ENCODE measurements at regions of chr17 and their contacts with region 1.

Region 1: GRCh38 chr17:38584350-38584925 is 21.3 kb downstream of the SRCIN1 start:
- DNase-seq: peak; percentile 54
- H3K4me3 ChIP-seq: no peak overlapping the region
- H3K27ac ChIP-seq: no peak overlapping the region
- H3K4me1 ChIP-seq: peaks cover 23% of the 10 kb centered on the region
- H3K27me3 ChIP-seq: no peaks in the 10 kb centered on the region
- CTCF ChIP-seq: peak; percentile 87 to 97

Region 2: DNA sequence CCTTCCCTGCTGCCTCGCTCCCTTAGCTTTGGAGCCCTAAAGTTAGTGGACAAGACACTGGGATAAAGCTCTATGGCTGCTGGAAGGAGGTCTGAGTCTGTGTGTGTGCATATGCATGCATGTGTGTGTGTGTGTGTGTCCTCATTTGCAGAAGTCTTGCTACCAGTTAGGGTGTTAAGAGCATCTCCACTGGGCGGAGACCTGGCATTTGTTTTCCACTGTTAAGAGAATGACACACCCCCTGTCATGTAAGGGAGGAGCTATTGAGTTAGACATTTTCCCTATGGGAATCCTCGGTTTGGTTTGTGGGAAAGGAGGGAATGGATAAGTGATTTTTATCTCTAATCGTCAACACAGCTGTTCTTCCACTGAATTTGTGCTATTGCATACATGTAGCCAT is 180.9 kb before region 1 on chr17:
- CTCF ChIA-PET with region 1: no interaction called
- dilution Hi-C with region 1: no loop called
- in situ Hi-C with region 1: no loop called
- intact Hi-C with region 1: no loop called
- DNase-seq: no peak
- H3K4me3 ChIP-seq: no peak overlapping the region
- H3K27ac ChIP-seq: no peak overlapping the region
- H3K4me1 ChIP-seq: no peaks in the 10 kb centered on the region
- H3K27me3 ChIP-seq: no peaks in the 10 kb centered on the region
- CTCF ChIP-seq: no peak

Region 3: GRCh38 chr17:38428112-38428642 is 156.3 kb before region 1 on chr17 and contains the start of gene ARHGAP23:
- CTCF ChIA-PET with region 1: no interaction called
- dilution Hi-C with region 1: no loop called
- in situ Hi-C with region 1: no loop called
- intact Hi-C with region 1: loop called (anchors 1 kb)
- DNase-seq: peak; percentile 24
- H3K4me3 ChIP-seq: peak within 1 kb of the TSS; percentile 68 to 73 (median 71)
- H3K27ac ChIP-seq: no peak within 1 kb of the TSS
- H3K4me1 ChIP-seq: peaks cover 20% of the 10 kb centered on the region
- H3K27me3 ChIP-seq: no peaks in the 10 kb centered on the region
- CTCF ChIP-seq: no peak
- total RNA-seq, gene ARHGAP23: 30.5 to 43.0 TPM

Region 4: DNA sequence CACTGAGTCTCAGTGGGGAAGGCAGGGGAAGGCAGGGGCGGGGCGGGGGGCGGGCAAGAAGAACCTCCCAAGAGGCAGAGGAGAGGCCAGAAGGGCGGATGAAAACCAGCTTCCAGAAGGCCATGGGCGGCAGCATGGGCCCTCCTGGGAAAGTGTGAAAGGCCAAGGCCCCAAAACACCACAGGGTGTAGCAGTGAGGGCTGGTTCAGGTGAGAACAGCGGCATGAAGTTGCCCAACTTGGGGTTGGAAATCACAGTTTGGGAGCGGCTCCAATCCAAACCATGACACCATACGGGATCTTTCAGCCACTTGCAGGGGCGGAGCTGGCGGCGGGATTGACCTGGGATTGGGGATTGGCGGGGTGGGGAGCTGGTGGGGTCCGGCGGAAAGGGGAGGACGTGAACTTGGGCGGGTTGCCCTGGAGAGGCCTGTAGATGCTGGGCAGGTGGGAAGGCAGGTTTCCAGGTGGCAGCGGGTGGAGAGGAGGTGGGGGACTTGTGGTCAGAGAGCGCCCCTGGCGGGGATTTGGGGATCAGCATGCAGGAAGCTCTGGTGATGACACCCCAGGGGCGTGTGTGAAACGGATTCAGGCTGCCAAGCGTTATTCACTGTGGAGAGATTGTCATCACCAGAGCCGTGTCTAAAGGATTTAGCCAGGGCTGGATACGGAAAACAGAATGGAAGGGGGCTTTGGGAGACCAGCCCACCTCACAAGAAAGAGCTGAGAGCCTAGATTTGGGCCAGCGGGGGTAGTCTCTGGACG is 75.2 kb before region 1 on chr17:
- CTCF ChIA-PET with region 1: interaction called, 5 read pairs
- dilution Hi-C with region 1: no loop called
- in situ Hi-C with region 1: no loop called
- intact Hi-C with region 1: loop called (anchors 1 kb)
- DNase-seq: peak; percentile 49
- H3K4me3 ChIP-seq: no peak overlapping the region
- H3K27ac ChIP-seq: no peak overlapping the region
- H3K4me1 ChIP-seq: peaks cover 10% of the 10 kb centered on the region
- H3K27me3 ChIP-seq: no peaks in the 10 kb centered on the region
- CTCF ChIP-seq: peak; percentile 59 to 70

Measured in mammary epithelial cell (primary cell).